ENCODE measurements at regions of chr19 and their contacts with region 1.

Region 1: DNA sequence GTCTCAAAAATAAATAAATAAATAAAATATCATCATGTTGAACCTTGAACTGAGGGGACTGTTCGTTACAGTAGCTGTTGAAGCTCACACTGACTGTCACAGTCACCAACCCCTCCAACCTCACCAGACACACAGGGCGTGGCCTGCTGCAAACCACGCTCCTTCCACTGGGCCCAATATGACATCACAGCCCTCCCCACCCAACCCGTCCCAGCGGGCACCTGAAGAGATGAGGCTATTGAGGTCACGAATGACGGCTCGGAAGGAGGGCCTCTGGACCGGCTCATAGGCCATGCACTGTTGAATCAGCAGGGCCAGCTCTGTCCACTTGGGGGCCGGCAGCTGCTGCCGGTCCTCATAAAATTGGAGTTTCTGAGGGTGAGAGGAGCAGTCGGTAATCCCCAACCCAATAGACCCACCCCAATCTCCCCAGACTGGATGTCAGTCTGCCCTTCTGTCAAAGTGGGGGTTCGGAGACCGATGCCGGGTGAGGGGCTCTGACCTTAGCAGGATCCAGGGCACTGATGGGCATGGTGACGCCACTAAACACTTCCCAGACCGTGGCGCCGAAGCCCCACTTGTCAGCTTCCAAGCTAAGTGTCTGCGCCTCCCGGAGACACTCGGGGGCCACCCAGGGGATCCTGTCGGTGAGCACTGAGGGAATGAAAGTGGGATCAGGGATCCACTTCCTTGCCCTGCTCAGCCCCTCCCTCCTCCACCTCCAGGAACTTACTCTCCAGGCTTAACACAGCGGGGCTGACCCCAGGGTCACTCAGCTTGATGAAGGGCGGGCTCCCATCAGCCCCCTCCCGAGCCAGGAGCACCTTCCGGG is 13.2 kb downstream of the JAK3 start:
- DNase-seq: no peak

Region 2: DNA sequence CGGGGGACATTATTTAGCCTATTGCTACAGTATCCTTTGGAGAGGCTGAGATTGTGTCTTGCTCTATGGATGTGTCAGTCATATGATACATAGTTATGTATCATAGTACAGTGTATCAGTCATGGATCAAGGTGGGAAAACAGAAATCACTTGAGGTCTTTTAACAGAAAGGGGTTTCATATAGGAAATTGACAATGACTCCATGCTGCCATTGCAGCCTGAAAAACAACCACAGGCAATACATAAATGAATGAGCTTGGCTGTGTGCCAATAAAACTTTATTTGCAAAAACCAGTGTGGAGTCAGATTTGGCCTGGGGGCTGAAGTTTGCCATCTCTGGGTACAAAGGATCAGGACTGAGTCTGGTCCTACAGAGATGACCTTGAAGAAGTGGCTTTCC is 243.7 kb before region 1 on chr19:
- CTCF ChIA-PET with region 1: no interaction called
- POLR2A ChIA-PET with region 1: no interaction called
- DNase-seq: no peak

Region 3: DNA sequence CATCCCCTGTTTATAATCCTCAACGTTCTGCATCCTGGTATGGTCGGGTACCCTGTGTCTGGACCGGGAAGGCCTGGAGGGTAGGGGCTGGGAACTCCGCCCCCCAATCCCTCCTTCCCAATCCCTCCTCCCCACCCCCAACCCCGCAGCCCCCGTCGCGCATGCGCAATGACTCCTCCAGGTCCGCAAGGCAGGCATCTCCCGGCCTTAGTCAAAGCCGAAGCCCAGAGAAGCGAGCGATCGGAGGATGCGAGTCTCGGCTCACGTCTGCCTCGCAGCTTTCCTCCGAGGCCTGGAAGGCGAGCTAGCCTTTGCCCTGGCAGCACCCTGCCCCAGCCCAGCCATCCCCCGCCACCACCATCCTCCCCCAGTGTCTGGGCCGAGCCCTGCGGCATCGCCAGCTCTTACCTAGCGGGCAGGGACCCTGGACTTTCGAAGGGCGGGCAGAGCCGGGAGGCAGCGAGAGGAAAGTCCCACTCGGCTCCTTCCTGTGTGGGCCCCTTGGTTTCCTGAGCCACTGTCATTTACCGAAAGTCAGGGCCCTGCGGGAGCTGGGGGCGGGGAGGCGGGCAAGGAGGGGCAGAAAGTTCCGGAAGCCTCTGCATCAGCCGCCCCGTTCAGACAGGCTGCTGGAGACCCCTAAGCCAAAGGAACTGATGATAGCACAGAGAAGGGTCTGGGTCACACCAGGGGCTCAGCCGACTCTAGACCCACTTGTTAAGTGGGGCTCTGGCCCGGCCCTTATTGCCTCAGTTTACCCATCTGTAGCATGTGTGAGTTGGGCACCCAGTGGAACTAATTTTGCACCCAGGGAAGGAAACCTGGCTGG is 13.2 kb after region 1 on chr19 and contains the start of gene JAK3:
- CTCF ChIA-PET with region 1: no interaction called
- POLR2A ChIA-PET with region 1: no interaction called
- DNase-seq: peak; percentile 69

Region 4: GRCh38 chr19:17951990-17952976 is 117.7 kb after region 1 on chr19:
- CTCF ChIA-PET with region 1: interaction called, 12 read pairs
- POLR2A ChIA-PET with region 1: no interaction called
- DNase-seq: no peak

Measured in HEK293T (cell line).